Activated T-helper 2 cell treated with anti-CD3 and anti-CD28 coated beads, Interferon-gamma antibody, Interleukin-2, Interleukin-4, amounts not matched to agents 10 μg/mL and 5 μg/mL and 100 μg/mL, durations not matched to agents 14 hours and 24 hours and 36 hours (primary cell): ENCODE measurements at regions of chr5 and their contacts with region 1.

Region 1: DNA sequence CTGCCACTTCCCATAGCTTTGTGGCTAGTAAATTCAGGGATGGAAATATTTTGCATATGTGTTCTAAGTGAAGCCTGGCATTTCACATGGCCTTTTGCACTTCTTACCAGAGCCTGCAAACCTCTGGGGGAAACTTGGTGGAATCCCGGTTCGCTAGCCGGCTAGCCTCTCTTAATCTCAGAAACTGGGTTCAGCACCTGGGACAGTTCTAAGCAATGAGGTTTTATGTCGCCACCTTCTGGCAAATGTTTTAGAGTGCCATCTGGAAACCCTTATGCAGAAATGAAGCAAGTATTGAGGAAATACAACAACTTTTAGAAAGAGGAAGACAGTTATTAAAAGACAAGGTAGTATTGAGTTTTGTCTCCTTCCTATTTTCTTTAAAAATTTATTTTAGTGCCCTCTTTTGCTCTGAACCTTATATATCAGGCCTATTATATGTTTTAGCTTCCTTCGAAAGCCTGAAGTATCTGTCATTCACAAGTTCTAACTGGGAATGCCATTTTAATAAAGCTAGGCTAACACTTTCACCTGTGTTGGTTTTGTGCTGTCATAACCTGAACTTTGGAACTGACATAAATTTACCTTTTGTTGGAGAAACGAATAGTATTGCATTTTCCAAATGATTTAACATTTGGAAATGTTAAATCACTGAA is 963 bp upstream of the HTR1A start:
- DNase-seq: no peak
- H3K4me3 Mint-ChIP-seq: no peak overlapping the region
- H3K27ac Mint-ChIP-seq: no peak overlapping the region
- H3K4me1 Mint-ChIP-seq: no peaks in the 10 kb centered on the region
- H3K27me3 Mint-ChIP-seq: peaks cover 12% of the 10 kb centered on the region

Region 2: DNA sequence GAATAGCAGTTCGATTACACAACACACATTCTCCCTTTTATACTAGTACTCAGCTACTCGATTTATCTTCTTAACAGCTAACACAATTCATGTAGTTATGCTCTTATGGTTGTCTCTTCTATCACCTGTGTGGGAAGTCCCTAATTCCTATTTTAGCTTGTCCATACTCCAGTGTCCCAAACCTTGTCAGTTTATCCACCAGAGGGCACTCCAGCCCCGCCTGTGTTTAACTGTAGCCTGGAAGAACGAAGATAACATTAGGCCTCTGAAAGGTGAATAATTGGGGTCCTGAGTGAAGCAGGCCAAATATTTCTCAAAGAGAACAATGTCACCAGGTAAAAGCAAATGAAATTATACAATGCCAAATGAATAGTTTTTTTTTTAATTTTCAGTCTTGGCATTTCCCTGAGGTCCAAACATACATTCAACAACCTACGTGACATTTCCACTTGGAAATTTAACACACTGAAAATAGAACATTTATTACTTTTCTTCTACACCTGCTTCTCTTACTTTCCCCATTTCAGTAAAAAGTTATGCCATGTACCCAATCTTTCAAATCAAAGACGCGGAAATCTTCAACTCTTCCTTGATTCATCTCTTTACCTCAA is 561.7 kb before region 1 on chr5:
- intact Hi-C with region 1: loop called (anchors 10 kb)
- DNase-seq: peak; percentile 11
- H3K4me3 Mint-ChIP-seq: no peak overlapping the region
- H3K27ac Mint-ChIP-seq: no peak overlapping the region
- H3K4me1 Mint-ChIP-seq: no peaks in the 10 kb centered on the region
- H3K27me3 Mint-ChIP-seq: no peaks in the 10 kb centered on the region

Region 3: DNA sequence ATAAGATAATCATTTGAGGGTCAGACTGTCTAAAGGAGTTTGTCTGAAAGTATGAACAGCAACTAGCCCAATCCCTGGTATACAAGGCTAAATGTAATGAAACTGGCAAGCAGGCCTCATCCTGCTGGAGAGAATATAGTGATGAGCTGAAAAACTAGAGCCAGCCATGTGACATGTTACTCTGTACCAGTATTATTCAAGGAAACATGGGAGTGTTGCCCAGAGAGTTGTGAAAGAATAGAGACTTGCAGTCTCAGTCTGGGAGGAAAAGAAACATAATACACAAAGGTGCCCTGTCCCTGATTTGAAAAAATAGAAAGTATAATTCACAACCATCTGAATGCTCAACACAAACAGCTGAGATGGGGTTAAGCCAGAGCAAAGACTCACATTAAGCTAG is 36.9 kb after region 1 on chr5:
- intact Hi-C with region 1: no loop called
- DNase-seq: no peak
- H3K4me3 Mint-ChIP-seq: no peak overlapping the region
- H3K27ac Mint-ChIP-seq: no peak overlapping the region
- H3K4me1 Mint-ChIP-seq: no peaks in the 10 kb centered on the region
- H3K27me3 Mint-ChIP-seq: no peaks in the 10 kb centered on the region